Endothelial cell of umbilical vein (primary cell): ENCODE measurements at regions of chr14 and their contacts with region 1.

Region 1: DNA sequence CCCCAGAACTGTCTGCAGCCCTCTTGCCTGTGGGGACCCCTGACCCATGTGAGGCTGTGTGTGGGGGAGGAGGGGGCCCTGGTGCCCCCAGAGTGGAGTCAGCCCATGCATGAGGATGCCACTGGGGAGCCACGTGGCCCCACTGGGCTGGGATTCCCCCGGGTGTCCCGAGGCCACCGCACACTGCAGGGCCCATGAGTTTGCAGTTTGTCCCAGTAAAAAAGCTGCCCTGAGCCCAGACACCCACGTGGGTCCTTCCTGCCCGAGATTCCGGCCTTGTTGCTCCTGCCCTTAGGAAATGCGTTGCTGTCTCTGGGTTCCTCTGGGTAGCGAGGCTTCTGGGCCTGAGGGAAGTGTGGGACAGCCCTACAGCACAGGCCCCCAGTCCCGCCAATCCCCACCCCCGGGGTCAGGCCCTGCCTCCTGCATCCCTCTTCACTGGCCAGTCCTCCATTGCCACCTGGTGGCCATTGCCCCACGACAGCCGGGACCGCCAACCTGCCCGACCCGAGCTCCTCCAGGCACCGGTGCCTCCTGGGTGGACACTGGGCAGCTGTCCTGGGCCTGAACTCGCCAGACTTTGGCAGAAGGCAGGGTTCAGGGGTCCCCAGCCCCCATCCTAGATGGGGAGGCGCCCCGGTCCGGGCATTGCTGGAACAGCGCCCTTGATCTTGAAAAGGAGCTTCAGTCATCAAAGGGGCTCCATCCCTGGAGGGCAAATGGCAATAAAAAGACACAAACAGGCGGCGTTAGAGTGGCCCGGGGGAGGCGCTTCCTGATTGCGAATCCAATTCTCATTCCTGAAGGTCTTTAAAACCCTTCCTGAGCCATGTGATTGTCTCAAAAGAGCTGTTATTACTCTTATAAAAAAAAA is 15.6 kb upstream of the C14orf180 start:
- DNase-seq: peak; percentile 62
- H3K4me3 ChIP-seq: no peak overlapping the region
- H3K27ac ChIP-seq: no peak overlapping the region
- H3K4me1 ChIP-seq: no peaks in the 10 kb centered on the region
- H3K27me3 ChIP-seq: no peaks in the 10 kb centered on the region
- CTCF ChIP-seq: peak; percentile 80 to 86
- POLR2A ChIP-seq: no peak

Region 2: GRCh38 chr14:103185051-103185992 is 1378.7 kb before region 1 on chr14:
- CTCF ChIA-PET with region 1: no interaction called
- POLR2A ChIA-PET with region 1: no interaction called
- dilution Hi-C with region 1: no loop called
- intact Hi-C with region 1: no loop called
- DNase-seq: peak; percentile 71
- H3K4me3 ChIP-seq: no peak overlapping the region
- H3K27ac ChIP-seq: no peak overlapping the region
- H3K4me1 ChIP-seq: no peaks in the 10 kb centered on the region
- H3K27me3 ChIP-seq: peaks cover 17 to 22% of the 10 kb centered on the region in 2 experiments
- CTCF ChIP-seq: peak; percentile 36 to 47
- POLR2A ChIP-seq: no peak

Region 3: GRCh38 chr14:104078031-104078455 is 485.9 kb before region 1 on chr14:
- CTCF ChIA-PET with region 1: interaction called, 66 read pairs
- POLR2A ChIA-PET with region 1: no interaction called
- dilution Hi-C with region 1: no loop called
- intact Hi-C with region 1: loop called (anchors 1 kb)
- DNase-seq: peak; percentile 81
- H3K4me3 ChIP-seq: no peak overlapping the region
- H3K27ac ChIP-seq: no peak overlapping the region
- H3K4me1 ChIP-seq: no peaks in the 10 kb centered on the region
- H3K27me3 ChIP-seq: peaks cover 0 to 2% of the 10 kb centered on the region in 2 experiments
- CTCF ChIP-seq: peak; percentile 100
- POLR2A ChIP-seq: no peak

Region 4: GRCh38 chr14:104094709-104095438 is 469.1 kb before region 1 on chr14:
- CTCF ChIA-PET with region 1: interaction called, 64 read pairs
- POLR2A ChIA-PET with region 1: no interaction called
- dilution Hi-C with region 1: no loop called
- intact Hi-C with region 1: loop called (anchors 1 kb)
- DNase-seq: peak; percentile 46
- H3K4me3 ChIP-seq: no peak overlapping the region
- H3K27ac ChIP-seq: no peak overlapping the region
- H3K4me1 ChIP-seq: no peaks in the 10 kb centered on the region
- H3K27me3 ChIP-seq: no peaks in the 10 kb centered on the region
- CTCF ChIP-seq: peak; percentile 85 to 97
- POLR2A ChIP-seq: no peak

Region 5: GRCh38 chr14:104144911-104145745 is 418.9 kb before region 1 on chr14:
- CTCF ChIA-PET with region 1: interaction called, 11 read pairs
- POLR2A ChIA-PET with region 1: no interaction called
- dilution Hi-C with region 1: no loop called
- intact Hi-C with region 1: no loop called
- DNase-seq: no peak
- H3K4me3 ChIP-seq: no peak overlapping the region
- H3K27ac ChIP-seq: no peak overlapping the region
- H3K4me1 ChIP-seq: peaks cover 23% of the 10 kb centered on the region
- H3K27me3 ChIP-seq: no peaks in the 10 kb centered on the region
- CTCF ChIP-seq: no peak
- POLR2A ChIP-seq: no peak

Region 6: GRCh38 chr14:104224506-104225277 is 339.3 kb before region 1 on chr14:
- CTCF ChIA-PET with region 1: interaction called, 12 read pairs
- POLR2A ChIA-PET with region 1: no interaction called
- dilution Hi-C with region 1: no loop called
- intact Hi-C with region 1: no loop called
- DNase-seq: peak; percentile 14
- H3K4me3 ChIP-seq: no peak overlapping the region
- H3K27ac ChIP-seq: no peak overlapping the region
- H3K4me1 ChIP-seq: no peaks in the 10 kb centered on the region
- H3K27me3 ChIP-seq: no peaks in the 10 kb centered on the region
- CTCF ChIP-seq: peak; percentile 60 to 75
- POLR2A ChIP-seq: no peak

Region 7: GRCh38 chr14:104436047-104436591 is 127.9 kb before region 1 on chr14:
- CTCF ChIA-PET with region 1: interaction called, 7 read pairs
- POLR2A ChIA-PET with region 1: no interaction called
- dilution Hi-C with region 1: no loop called
- intact Hi-C with region 1: loop called (anchors 2 kb)
- DNase-seq: peak; percentile 96
- H3K4me3 ChIP-seq: no peak overlapping the region
- H3K27ac ChIP-seq: peak overlapping the region; percentile 89
- H3K4me1 ChIP-seq: peaks cover 16% of the 10 kb centered on the region
- H3K27me3 ChIP-seq: no peaks in the 10 kb centered on the region
- CTCF ChIP-seq: no peak
- POLR2A ChIP-seq: peak; percentile 20

Region 8: GRCh38 chr14:104576232-104576969 is 12.4 kb after region 1 on chr14:
- CTCF ChIA-PET with region 1: interaction called, 16 read pairs
- POLR2A ChIA-PET with region 1: no interaction called
- dilution Hi-C with region 1: no loop called
- intact Hi-C with region 1: no loop called
- DNase-seq: no peak
- H3K4me3 ChIP-seq: no peak overlapping the region
- H3K27ac ChIP-seq: no peak overlapping the region
- H3K4me1 ChIP-seq: no peaks in the 10 kb centered on the region
- H3K27me3 ChIP-seq: no peaks in the 10 kb centered on the region
- CTCF ChIP-seq: no peak
- POLR2A ChIP-seq: no peak